ENCODE measurements at regions of chr17 and their contacts with region 1.

Region 1: DNA sequence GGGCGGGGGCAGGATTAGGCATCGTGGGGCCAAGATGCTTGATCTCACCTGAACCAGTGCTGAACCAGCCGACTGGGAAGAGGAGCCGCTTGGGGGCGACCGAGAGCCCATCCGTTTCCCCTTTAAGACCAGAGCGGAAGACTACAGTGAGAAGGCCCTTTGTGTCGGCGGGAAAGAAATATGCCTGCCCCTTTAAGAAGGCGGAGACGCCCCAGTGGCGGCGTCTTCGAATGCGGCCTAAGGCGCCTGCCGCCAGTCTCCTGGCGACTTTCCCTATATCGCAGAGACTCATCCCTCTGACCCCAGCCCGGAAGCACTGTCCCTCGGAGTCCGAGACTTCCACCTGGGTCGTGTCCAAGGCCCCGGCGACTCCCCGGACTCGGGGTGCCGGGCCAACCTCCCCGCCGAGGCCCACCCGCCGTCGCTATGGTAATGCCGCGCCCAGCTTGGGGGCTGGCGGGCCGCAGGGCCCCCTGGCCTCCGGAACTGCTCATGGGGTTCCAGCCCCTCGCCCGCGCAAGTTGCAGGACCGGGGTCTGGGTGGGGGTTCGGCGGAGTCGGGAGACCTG is at the start of gene HROB:
- DNase-seq: peak; percentile 95 to 100 (median 98)
- ATAC-seq: peak; percentile 93
- H3K4me3 ChIP-seq: peak within 1 kb of the TSS; percentile 59
- H3K4me3 Mint-ChIP-seq: peak within 1 kb of the TSS; percentile 84
- H3K27ac ChIP-seq: peak within 1 kb of the TSS; percentile 41 to 59
- H3K27ac Mint-ChIP-seq: peak within 1 kb of the TSS; percentile 68
- H3K4me1 ChIP-seq: peaks cover 19% of the 10 kb centered on the region
- H3K4me1 Mint-ChIP-seq: peaks cover 7% of the 10 kb centered on the region
- H3K27me3 ChIP-seq: peaks cover 8 to 12% of the 10 kb centered on the region in 2 experiments
- H3K27me3 Mint-ChIP-seq: peaks cover 17% of the 10 kb centered on the region
- CTCF ChIP-seq: peak; percentile 86
- total RNA-seq, gene HROB: 1.6 TPM

Region 2: DNA sequence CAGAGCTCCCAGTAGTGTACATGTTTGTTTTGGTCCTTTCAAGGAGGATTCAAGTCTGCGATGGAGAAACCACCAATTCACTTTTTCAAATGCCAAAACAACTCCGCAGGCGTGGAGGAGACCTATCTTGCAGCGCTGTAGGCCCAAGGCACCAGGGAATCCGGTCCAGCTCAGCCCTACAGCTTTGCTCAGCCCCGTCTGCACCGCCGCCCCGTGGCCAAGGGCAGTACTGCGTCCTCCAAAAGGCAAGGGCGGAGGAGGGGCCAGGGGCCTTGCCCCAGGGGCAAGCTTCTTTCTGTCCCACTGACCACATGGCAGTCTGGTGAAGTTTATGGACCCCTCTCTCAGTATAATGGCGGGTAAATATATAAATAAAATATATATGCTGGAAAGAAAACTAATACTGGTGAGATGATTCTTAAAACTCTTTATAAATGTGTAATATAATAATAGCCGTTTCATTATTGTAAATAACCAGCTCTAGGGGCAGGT is 295.5 kb before region 1 on chr17:
- CTCF ChIA-PET with region 1: no interaction called
- POLR2A ChIA-PET with region 1: no interaction called
- intact Hi-C with region 1: no loop called
- DNase-seq: peak; percentile 59 to 83 (median 72)
- ATAC-seq: peak; percentile 100
- H3K4me3 ChIP-seq: no peak overlapping the region
- H3K4me3 Mint-ChIP-seq: no peak overlapping the region
- H3K27ac ChIP-seq: no peak overlapping the region
- H3K27ac Mint-ChIP-seq: no peak overlapping the region
- H3K4me1 ChIP-seq: no peaks in the 10 kb centered on the region
- H3K4me1 Mint-ChIP-seq: no peaks in the 10 kb centered on the region
- H3K27me3 ChIP-seq: peaks cover 3 to 7% of the 10 kb centered on the region in 2 experiments
- H3K27me3 Mint-ChIP-seq: peaks cover 40% of the 10 kb centered on the region
- CTCF ChIP-seq: peak; percentile 92

Region 3: DNA sequence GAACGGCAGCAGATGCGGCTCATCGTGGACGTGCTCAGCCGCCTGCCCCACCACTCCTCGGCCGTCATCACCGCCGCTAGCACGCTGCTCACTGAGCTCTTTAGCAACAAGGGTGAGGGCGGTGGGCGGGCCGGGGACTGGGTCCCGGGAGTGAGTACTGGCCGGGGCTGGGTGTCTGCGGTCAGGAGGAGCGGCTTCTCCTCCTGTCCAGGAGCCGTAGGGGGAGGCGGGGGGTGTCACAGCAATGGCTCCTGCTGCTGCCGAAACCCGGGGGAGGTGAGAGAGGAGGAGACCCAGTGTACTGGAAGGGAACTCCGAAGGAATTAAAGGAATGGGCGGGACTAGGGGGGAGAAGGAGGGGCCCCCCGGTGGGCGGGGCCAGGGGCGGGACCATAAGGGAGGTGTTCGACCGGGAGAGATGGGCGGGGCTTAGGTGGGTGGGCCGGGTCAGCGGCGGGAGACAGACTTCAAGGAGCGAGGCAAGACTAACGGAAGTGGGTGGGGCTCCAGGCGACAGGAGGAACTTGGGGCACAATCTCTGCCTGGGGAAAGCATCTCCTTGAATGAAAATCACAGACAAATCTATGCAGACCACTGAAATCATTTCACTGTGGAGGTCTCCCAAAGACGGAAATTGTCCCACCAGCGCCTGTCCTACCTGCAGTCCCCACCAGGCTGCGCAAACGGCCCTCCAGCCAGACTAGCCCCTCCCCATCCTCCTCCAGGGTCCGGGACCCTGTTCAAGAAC is 135.0 kb before region 1 on chr17:
- CTCF ChIA-PET with region 1: no interaction called
- POLR2A ChIA-PET with region 1: no interaction called
- intact Hi-C with region 1: loop called in 1 of 2 experiments (anchors 5 kb)
- DNase-seq: peak; percentile 90 to 100 (median 98)
- ATAC-seq: peak; percentile 80
- H3K4me3 ChIP-seq: peak overlapping the region; percentile 91
- H3K4me3 Mint-ChIP-seq: peak overlapping the region; percentile 91
- H3K27ac ChIP-seq: no peak overlapping the region
- H3K27ac Mint-ChIP-seq: no peak overlapping the region
- H3K4me1 ChIP-seq: peaks cover 52% of the 10 kb centered on the region
- H3K4me1 Mint-ChIP-seq: peaks cover 22% of the 10 kb centered on the region
- H3K27me3 ChIP-seq: peaks cover 0 to 8% of the 10 kb centered on the region in 2 experiments
- H3K27me3 Mint-ChIP-seq: peaks cover 33% of the 10 kb centered on the region
- CTCF ChIP-seq: no peak

Region 4: DNA sequence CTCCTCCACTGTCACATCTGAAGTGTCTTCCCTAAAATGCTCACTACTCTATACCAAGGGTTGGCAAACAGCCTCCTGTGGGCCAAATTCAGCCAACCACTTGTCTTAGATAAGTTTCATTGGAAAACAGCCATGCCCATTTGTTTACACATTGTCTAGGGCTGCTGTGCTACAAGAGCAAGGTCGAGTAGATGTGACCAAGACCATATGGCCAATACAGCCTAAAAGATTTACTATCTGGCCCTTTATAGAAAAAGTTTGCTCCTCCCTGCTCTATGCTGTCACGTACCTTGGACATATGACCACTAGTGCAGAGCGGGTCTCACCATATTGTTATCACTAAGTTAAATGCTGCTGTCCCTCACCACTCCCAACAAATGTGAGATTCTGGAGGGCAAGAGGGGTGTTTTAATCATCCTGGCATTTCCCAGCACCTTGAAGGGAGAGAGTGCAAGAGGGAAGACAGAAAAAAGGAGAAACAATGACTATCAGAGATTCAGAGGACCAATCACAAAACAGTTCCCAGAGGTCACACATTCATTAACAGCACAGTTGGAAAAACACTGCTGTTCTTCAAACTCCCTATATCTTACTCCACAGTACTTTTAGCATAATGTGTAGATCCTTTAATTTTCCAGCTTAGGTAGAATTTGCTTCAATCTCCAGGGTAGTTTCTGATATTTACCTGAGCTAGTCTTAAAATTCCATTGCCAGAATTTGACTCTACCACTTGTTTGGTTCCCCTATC is 88.5 kb before region 1 on chr17:
- CTCF ChIA-PET with region 1: no interaction called
- POLR2A ChIA-PET with region 1: no interaction called
- intact Hi-C with region 1: no loop called
- DNase-seq: no peak
- ATAC-seq: no peak
- H3K4me3 ChIP-seq: no peak overlapping the region
- H3K4me3 Mint-ChIP-seq: no peak overlapping the region
- H3K27ac ChIP-seq: no peak overlapping the region
- H3K27ac Mint-ChIP-seq: peak overlapping the region; percentile 18
- H3K4me1 ChIP-seq: peaks cover 2% of the 10 kb centered on the region
- H3K4me1 Mint-ChIP-seq: peaks cover 10% of the 10 kb centered on the region
- H3K27me3 ChIP-seq: no peaks in the 10 kb centered on the region
- H3K27me3 Mint-ChIP-seq: no peaks in the 10 kb centered on the region
- CTCF ChIP-seq: no peak

Region 5: DNA sequence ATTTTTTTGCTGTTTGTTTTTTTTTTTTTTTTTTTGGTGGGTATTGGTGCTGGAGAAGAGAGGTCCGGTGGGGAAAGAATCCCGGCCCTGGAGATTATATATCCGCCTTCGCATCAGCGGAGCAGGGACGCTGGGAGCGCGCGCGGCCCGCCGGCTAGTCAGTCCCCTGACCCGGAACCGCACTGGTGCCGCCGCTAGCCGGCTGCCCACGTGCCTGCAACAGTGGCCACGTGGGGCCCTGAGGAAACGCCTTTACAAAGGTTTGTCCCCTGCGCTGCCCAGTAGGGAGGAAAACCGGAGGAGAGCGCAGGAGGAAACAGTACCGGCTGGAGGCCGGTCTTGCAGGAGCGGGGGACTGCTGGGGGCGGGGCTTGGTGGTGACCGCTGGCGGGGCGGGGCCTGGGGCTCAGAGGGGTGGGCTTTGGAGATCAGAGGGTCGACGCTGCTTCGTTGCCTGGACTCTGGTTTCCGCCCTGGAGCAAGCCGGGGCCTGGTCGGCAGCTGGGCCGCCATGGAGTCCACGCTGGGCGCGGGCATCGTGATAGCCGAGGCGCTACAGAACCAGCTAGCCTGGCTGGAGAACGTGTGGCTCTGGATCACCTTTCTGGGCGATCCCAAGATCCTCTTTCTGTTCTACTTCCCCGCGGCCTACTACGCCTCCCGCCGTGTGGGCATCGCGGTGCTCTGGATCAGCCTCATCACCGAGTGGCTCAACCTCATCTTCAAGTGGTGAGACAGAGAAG is 71.2 kb before region 1 on chr17 and contains the start of gene G6PC3:
- CTCF ChIA-PET with region 1: no interaction called
- POLR2A ChIA-PET with region 1: no interaction called
- intact Hi-C with region 1: loop called in 1 of 2 experiments (anchors 1 kb)
- DNase-seq: peak; percentile 34 to 88 (median 60)
- ATAC-seq: peak; percentile 32
- H3K4me3 ChIP-seq: peak within 1 kb of the TSS; percentile 77
- H3K4me3 Mint-ChIP-seq: peak within 1 kb of the TSS; percentile 95
- H3K27ac ChIP-seq: peak within 1 kb of the TSS; percentile 61 to 71
- H3K27ac Mint-ChIP-seq: peak within 1 kb of the TSS; percentile 91
- H3K4me1 ChIP-seq: peaks cover 37% of the 10 kb centered on the region
- H3K4me1 Mint-ChIP-seq: peaks cover 49% of the 10 kb centered on the region
- H3K27me3 ChIP-seq: no peaks in the 10 kb centered on the region
- H3K27me3 Mint-ChIP-seq: no peaks in the 10 kb centered on the region
- CTCF ChIP-seq: no peak
- total RNA-seq, gene G6PC3: 5.6 to 5.8 TPM

Region 6: GRCh38 chr17:44199553-44200477 is 58.0 kb after region 1 on chr17 and contains the start of gene ATXN7L3:
- CTCF ChIA-PET with region 1: no interaction called
- POLR2A ChIA-PET with region 1: no interaction called
- intact Hi-C with region 1: loop called in 1 of 2 experiments (anchors 5 kb)
- DNase-seq: peak; percentile 99 to 100 (median 99)
- ATAC-seq: peak; percentile 80
- H3K4me3 ChIP-seq: peak within 1 kb of the TSS; percentile 94
- H3K4me3 Mint-ChIP-seq: peak within 1 kb of the TSS; percentile 93
- H3K27ac ChIP-seq: peak within 1 kb of the TSS; percentile 83 to 87
- H3K27ac Mint-ChIP-seq: peak within 1 kb of the TSS; percentile 93
- H3K4me1 ChIP-seq: peaks cover 45% of the 10 kb centered on the region
- H3K4me1 Mint-ChIP-seq: peaks cover 46% of the 10 kb centered on the region
- H3K27me3 ChIP-seq: no peaks in the 10 kb centered on the region
- H3K27me3 Mint-ChIP-seq: no peaks in the 10 kb centered on the region
- CTCF ChIP-seq: no peak
- total RNA-seq, gene ATXN7L3: 85.2 to 99.2 TPM

Region 7: GRCh38 chr17:44279666-44280391 is 138.0 kb after region 1 on chr17:
- CTCF ChIA-PET with region 1: no interaction called
- POLR2A ChIA-PET with region 1: no interaction called
- intact Hi-C with region 1: no loop called
- DNase-seq: peak in 3 of 14 experiments; percentile 27 to 76 (median 67)
- ATAC-seq: no peak
- H3K4me3 ChIP-seq: no peak overlapping the region
- H3K4me3 Mint-ChIP-seq: no peak overlapping the region
- H3K27ac ChIP-seq: no peak overlapping the region
- H3K27ac Mint-ChIP-seq: no peak overlapping the region
- H3K4me1 ChIP-seq: peaks cover 13% of the 10 kb centered on the region
- H3K4me1 Mint-ChIP-seq: no peaks in the 10 kb centered on the region
- H3K27me3 ChIP-seq: no peaks in the 10 kb centered on the region
- H3K27me3 Mint-ChIP-seq: peaks cover 5% of the 10 kb centered on the region
- CTCF ChIP-seq: no peak

Region 8: DNA sequence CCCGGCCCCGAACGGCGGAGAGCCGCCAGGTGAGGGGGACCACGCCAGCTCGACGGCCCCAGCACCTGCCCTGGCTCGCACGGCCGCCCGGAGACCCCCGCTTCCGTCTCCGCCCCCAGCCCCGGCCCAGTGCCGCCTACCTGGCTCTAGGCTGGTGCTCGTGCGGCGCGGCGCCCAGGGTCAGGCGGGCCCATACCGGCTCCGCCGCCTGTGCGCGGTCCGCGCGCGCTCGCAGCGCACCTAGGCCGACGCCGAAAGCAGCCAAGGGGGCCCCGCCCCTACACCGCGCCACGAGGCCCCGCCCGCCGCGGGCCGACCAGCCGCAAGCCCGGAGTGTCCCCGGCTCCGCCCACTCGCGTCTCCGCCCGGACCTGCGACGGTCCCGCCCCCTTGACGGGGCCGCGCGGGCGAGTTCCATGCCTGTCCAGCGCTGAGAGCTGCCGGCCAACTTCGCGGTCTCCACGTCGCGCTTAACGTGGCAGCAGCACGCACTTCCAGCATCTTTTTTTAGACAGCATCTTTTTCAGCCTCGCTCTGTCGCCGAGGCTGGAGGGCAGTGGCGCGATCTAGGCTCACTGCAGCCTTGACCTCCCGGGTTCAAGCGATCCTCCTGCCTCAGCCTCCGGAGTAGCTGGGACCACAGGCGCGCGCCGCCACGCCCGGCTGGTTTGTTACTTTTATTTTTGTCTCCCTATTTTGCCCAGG is 182.9 kb after region 1 on chr17 and contains the start of gene SLC25A39:
- CTCF ChIA-PET with region 1: no interaction called
- POLR2A ChIA-PET with region 1: interaction called, 4 read pairs
- intact Hi-C with region 1: loop called in 1 of 2 experiments (anchors 1 kb)
- DNase-seq: peak; percentile 87 to 97 (median 94)
- ATAC-seq: peak; percentile 69
- H3K4me3 ChIP-seq: peak within 1 kb of the TSS; percentile 85
- H3K4me3 Mint-ChIP-seq: peak within 1 kb of the TSS; percentile 95
- H3K27ac ChIP-seq: peak within 1 kb of the TSS; percentile 83 to 90
- H3K27ac Mint-ChIP-seq: peak within 1 kb of the TSS; percentile 96
- H3K4me1 ChIP-seq: peaks cover 44% of the 10 kb centered on the region
- H3K4me1 Mint-ChIP-seq: peaks cover 27% of the 10 kb centered on the region
- H3K27me3 ChIP-seq: no peaks in the 10 kb centered on the region
- H3K27me3 Mint-ChIP-seq: no peaks in the 10 kb centered on the region
- CTCF ChIP-seq: no peak
- total RNA-seq, gene SLC25A39: 55.5 to 65.5 TPM

Region 9: GRCh38 chr17:44331249-44331760 is 189.5 kb after region 1 on chr17:
- CTCF ChIA-PET with region 1: no interaction called
- POLR2A ChIA-PET with region 1: interaction called, 4 read pairs
- intact Hi-C with region 1: loop called (anchors 1 to 5 kb)
- DNase-seq: peak; percentile 48 to 87 (median 59)
- ATAC-seq: peak; percentile 17
- H3K4me3 ChIP-seq: no peak overlapping the region
- H3K4me3 Mint-ChIP-seq: no peak overlapping the region
- H3K27ac ChIP-seq: no peak overlapping the region
- H3K27ac Mint-ChIP-seq: peak overlapping the region; percentile 43
- H3K4me1 ChIP-seq: peaks cover 14% of the 10 kb centered on the region
- H3K4me1 Mint-ChIP-seq: peaks cover 17% of the 10 kb centered on the region
- H3K27me3 ChIP-seq: no peaks in the 10 kb centered on the region
- H3K27me3 Mint-ChIP-seq: no peaks in the 10 kb centered on the region
- CTCF ChIP-seq: peak; percentile 78

Measured in CD4-positive, alpha-beta T cell (primary cell).